Esophagus squamous epithelium (tissue), 5 donors: ENCODE measurements at regions of chr1 and their contacts with region 1.

Region 1: DNA sequence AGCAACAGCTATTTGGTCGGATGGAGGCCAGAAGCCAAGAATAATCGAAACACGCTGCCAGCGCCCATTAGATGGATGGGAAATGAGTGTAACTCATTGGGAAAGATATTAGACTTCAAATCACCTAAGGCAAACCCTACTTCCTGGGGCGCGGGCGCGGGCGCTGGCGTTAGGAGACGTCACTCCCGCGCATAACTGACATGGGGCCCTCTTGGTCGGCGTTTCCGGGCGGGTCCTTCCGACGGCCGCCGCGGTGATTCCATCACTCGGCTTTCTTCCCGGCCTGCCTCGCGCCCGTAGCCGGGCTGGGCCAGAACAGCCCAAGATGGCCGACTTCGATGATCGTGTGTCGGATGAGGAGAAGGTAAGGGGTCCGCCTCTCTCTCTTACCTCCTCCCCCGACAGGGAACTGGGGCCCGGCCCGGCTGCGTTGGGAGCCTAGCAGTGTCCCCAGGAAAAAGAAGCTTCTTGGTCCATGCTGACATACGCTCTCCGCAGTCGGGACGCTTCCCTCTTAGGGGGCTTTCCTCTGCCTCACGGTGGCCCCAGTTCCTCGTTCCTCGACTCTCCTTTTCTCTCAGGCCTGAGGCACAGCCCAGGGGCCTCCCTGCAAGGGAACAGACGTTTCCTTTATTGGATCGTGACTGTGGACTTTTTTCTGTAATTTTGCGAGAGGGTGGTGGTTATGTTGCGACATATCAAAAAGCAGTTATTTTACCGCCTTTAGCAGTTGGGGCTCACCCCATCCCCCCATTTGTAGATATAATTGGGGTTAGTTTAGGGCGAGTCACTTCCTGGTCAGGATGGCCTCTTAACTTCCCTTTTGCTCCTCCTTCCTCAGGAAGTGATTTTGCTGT is at the start of gene CAPZA1:
- DNase-seq: peak; percentile 62
- H3K4me3 ChIP-seq: peak within 1 kb of the TSS; percentile 85 to 98 (median 92)
- H3K27ac ChIP-seq: peak within 1 kb of the TSS; percentile 98 to 100 (median 99)
- H3K4me1 ChIP-seq: peaks cover 4 to 72% (median 29%) of the 10 kb centered on the region in 3 donors
- H3K27me3 ChIP-seq: no peaks in the 10 kb centered on the region
- CTCF ChIP-seq: no peak
- POLR2A ChIP-seq: peak in 3 of 4 donors; percentile 41 to 96 (median 83)
- total RNA-seq, gene CAPZA1: 129 to 286 (median 209) TPM

Region 2: GRCh38 chr1:112395821-112396652 is 223.7 kb before region 1 on chr1 and contains the start of gene CTTNBP2NL:
- intact Hi-C with region 1: loop called (anchors 5 kb)
- DNase-seq: peak; percentile 57
- H3K4me3 ChIP-seq: peak within 1 kb of the TSS; percentile 69 to 91 (median 89)
- H3K27ac ChIP-seq: peak within 1 kb of the TSS; percentile 91 to 98 (median 98)
- H3K4me1 ChIP-seq: peaks cover 31 to 90% (median 42%) of the 10 kb centered on the region in 3 donors
- H3K27me3 ChIP-seq: no peaks in the 10 kb centered on the region
- CTCF ChIP-seq: peak in 2 of 6 experiments; percentile 3 to 14
- POLR2A ChIP-seq: peak in 3 of 4 donors; percentile 14 to 79 (median 47)
- total RNA-seq, gene CTTNBP2NL: 19.6 to 26.3 (median 22.8) TPM

Region 3: GRCh38 chr1:112501810-112502641 is 117.7 kb before region 1 on chr1:
- intact Hi-C with region 1: loop called (anchors 5 kb)
- DNase-seq: no peak
- H3K4me3 ChIP-seq: peak overlapping the region; percentile 55 to 74 (median 65)
- H3K27ac ChIP-seq: peak overlapping the region in 3 of 4 donors; percentile 66 to 76 (median 68)
- H3K4me1 ChIP-seq: peaks cover 7 to 22% (median 18%) of the 10 kb centered on the region in 3 donors
- H3K27me3 ChIP-seq: peaks cover 0 to 30% (median 0%) of the 10 kb centered on the region in 4 donors
- CTCF ChIP-seq: peak; percentile 55 to 86 (median 73)
- POLR2A ChIP-seq: no peak